ENCODE measurements at regions of chr7 and their contacts with region 1.

Region 1: GRCh38 chr7:148262721-148263229 is 327.8 kb upstream of the C7orf33 start:
- DNase-seq: peak; percentile 31 to 48 (median 35)
- H3K4me3 ChIP-seq: no peak overlapping the region
- H3K4me3 Mint-ChIP-seq: peak overlapping the region in 6 of 8 donors; percentile 1 to 65 (median 40)
- H3K27ac ChIP-seq: no peak overlapping the region
- H3K27ac Mint-ChIP-seq: peak overlapping the region in 1 of 7 donors; percentile 52
- H3K4me1 ChIP-seq: peaks cover 4% of the 10 kb centered on the region
- H3K4me1 Mint-ChIP-seq: peaks cover 7 to 9% (median 8%) of the 10 kb centered on the region in 4 donors
- H3K27me3 ChIP-seq: no peaks in the 10 kb centered on the region
- H3K27me3 Mint-ChIP-seq: peaks cover 2 to 7% of the 10 kb centered on the region in 2 donors

Region 2: GRCh38 chr7:148276314-148277041 is 13.7 kb after region 1 on chr7:
- CTCF ChIA-PET with region 1: interaction called, 41 read pairs
- POLR2A ChIA-PET with region 1: no interaction called
- intact Hi-C with region 1: no loop called
- DNase-seq: peak in 1 of 5 donors; percentile 8
- H3K4me3 ChIP-seq: no peak overlapping the region
- H3K4me3 Mint-ChIP-seq: no peak overlapping the region
- H3K27ac ChIP-seq: no peak overlapping the region
- H3K27ac Mint-ChIP-seq: no peak overlapping the region
- H3K4me1 ChIP-seq: peaks cover 4% of the 10 kb centered on the region
- H3K4me1 Mint-ChIP-seq: peaks cover 0 to 8% (median 3%) of the 10 kb centered on the region in 4 donors
- H3K27me3 ChIP-seq: no peaks in the 10 kb centered on the region
- H3K27me3 Mint-ChIP-seq: peaks cover 0 to 13% of the 10 kb centered on the region in 2 donors

Region 3: GRCh38 chr7:148304456-148304855 is 41.7 kb after region 1 on chr7:
- CTCF ChIA-PET with region 1: interaction called, 11 read pairs
- POLR2A ChIA-PET with region 1: no interaction called
- intact Hi-C with region 1: no loop called
- DNase-seq: no peak
- H3K4me3 ChIP-seq: no peak overlapping the region
- H3K4me3 Mint-ChIP-seq: peak overlapping the region in 4 of 8 donors; percentile 15 to 68 (median 32)
- H3K27ac ChIP-seq: no peak overlapping the region
- H3K27ac Mint-ChIP-seq: peak overlapping the region in 3 of 7 donors; percentile 22 to 53 (median 47)
- H3K4me1 ChIP-seq: peaks cover 17% of the 10 kb centered on the region
- H3K4me1 Mint-ChIP-seq: peaks cover 11 to 35% (median 19%) of the 10 kb centered on the region in 4 donors
- H3K27me3 ChIP-seq: no peaks in the 10 kb centered on the region
- H3K27me3 Mint-ChIP-seq: peaks cover 0 to 1% of the 10 kb centered on the region in 2 donors

Region 4: DNA sequence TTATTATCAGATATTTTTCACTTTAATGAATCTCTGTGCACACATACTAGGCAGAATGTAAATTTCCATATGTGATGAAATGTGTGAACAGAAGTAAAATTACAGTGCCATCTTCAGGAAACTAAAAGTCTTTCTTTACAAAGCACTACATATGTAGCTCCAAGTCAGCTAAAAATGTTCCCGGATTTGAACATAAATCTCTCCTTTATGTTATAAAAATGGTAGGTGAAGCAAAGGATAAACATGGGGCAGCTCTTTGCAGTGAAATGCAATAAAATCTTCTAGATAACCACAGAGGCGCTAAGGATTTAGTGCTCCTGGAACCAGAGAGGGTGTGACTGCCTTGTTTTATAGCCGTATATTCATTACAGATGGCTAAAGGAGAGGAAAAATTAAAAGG is 222.8 kb after region 1 on chr7:
- CTCF ChIA-PET with region 1: interaction called, 4 read pairs
- POLR2A ChIA-PET with region 1: no interaction called
- intact Hi-C with region 1: loop called (anchors 5 kb)
- DNase-seq: no peak
- H3K4me3 ChIP-seq: no peak overlapping the region
- H3K4me3 Mint-ChIP-seq: no peak overlapping the region
- H3K27ac ChIP-seq: no peak overlapping the region
- H3K27ac Mint-ChIP-seq: no peak overlapping the region
- H3K4me1 ChIP-seq: peaks cover 7% of the 10 kb centered on the region
- H3K4me1 Mint-ChIP-seq: peaks cover 6 to 8% (median 6%) of the 10 kb centered on the region in 4 donors
- H3K27me3 ChIP-seq: no peaks in the 10 kb centered on the region
- H3K27me3 Mint-ChIP-seq: peaks cover 7 to 9% of the 10 kb centered on the region in 2 donors

Region 5: GRCh38 chr7:148527707-148528168 is 265.0 kb after region 1 on chr7:
- CTCF ChIA-PET with region 1: interaction called, 29 read pairs
- POLR2A ChIA-PET with region 1: no interaction called
- intact Hi-C with region 1: no loop called
- DNase-seq: peak; percentile 75 to 88 (median 80)
- H3K4me3 ChIP-seq: no peak overlapping the region
- H3K4me3 Mint-ChIP-seq: no peak overlapping the region
- H3K27ac ChIP-seq: no peak overlapping the region
- H3K27ac Mint-ChIP-seq: no peak overlapping the region
- H3K4me1 ChIP-seq: no peaks in the 10 kb centered on the region
- H3K4me1 Mint-ChIP-seq: peaks cover 3 to 7% (median 4%) of the 10 kb centered on the region in 4 donors
- H3K27me3 ChIP-seq: no peaks in the 10 kb centered on the region
- H3K27me3 Mint-ChIP-seq: peaks cover 21 to 33% of the 10 kb centered on the region in 2 donors

Measured in CD4-positive, alpha-beta memory T cell (primary cell).